Activated B cell treated with CpG ODN at 0.5 μM for 24 hours (primary cell): ENCODE measurements at regions of chr1 and their contacts with region 1.

Region 1: DNA sequence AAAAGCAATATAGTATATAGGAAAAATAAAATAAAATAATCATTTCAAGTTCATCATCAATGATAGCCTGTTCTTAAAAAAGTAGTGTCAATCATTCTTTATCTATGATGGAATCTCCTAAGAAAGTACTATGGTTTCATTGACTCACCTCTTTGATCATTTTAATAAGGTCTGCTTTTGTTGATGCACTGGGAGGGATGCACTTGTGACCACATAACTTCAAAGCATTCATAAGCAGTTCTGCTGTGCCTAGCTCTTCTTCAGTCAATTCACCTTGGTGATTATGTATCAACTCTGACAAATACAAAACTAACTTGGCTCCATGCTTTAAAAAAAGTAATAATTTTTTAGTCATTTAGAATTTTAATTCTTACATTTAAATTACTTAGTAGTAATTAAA is 84.8 kb upstream of the GNG4 start:
- DNase-seq: no peak
- ATAC-seq: no peak
- H3K4me3 Mint-ChIP-seq: no peak overlapping the region
- H3K27ac Mint-ChIP-seq: no peak overlapping the region
- H3K4me1 Mint-ChIP-seq: no peaks in the 10 kb centered on the region
- H3K27me3 Mint-ChIP-seq: no peaks in the 10 kb centered on the region
- CTCF ChIP-seq: no peak

Region 2: DNA sequence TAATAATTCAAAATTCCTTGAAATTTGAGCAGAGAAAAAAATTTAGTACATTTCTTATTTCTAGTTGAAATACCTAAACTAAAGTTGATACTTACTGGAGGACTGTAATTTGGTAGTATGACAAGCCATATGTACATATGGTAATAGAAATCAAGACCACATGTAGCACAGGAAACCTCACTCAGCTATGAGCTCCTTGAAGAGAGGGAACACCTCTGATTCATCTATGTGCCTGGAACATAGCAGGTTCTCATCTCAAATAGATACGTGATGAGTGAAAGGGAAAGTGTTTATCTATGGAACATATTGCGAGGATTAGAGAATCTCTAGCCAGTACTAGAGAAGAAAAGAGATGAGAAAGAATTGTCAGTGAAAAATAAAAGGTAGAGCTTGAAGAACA is 36.8 kb before region 1 on chr1:
- CTCF ChIA-PET with region 1: no interaction called
- POLR2A ChIA-PET with region 1: no interaction called
- intact Hi-C with region 1: no loop called
- DNase-seq: no peak
- ATAC-seq: no peak
- H3K4me3 Mint-ChIP-seq: no peak overlapping the region
- H3K27ac Mint-ChIP-seq: no peak overlapping the region
- H3K4me1 Mint-ChIP-seq: no peaks in the 10 kb centered on the region
- H3K27me3 Mint-ChIP-seq: no peaks in the 10 kb centered on the region
- CTCF ChIP-seq: no peak

Region 3: GRCh38 chr1:235745503-235746136 is 11.3 kb after region 1 on chr1:
- CTCF ChIA-PET with region 1: no interaction called
- POLR2A ChIA-PET with region 1: no interaction called
- intact Hi-C with region 1: loop called (anchors 2 kb)
- DNase-seq: no peak
- ATAC-seq: no peak
- H3K4me3 Mint-ChIP-seq: no peak overlapping the region
- H3K27ac Mint-ChIP-seq: no peak overlapping the region
- H3K4me1 Mint-ChIP-seq: no peaks in the 10 kb centered on the region
- H3K27me3 Mint-ChIP-seq: no peaks in the 10 kb centered on the region
- CTCF ChIP-seq: no peak

Region 4: DNA sequence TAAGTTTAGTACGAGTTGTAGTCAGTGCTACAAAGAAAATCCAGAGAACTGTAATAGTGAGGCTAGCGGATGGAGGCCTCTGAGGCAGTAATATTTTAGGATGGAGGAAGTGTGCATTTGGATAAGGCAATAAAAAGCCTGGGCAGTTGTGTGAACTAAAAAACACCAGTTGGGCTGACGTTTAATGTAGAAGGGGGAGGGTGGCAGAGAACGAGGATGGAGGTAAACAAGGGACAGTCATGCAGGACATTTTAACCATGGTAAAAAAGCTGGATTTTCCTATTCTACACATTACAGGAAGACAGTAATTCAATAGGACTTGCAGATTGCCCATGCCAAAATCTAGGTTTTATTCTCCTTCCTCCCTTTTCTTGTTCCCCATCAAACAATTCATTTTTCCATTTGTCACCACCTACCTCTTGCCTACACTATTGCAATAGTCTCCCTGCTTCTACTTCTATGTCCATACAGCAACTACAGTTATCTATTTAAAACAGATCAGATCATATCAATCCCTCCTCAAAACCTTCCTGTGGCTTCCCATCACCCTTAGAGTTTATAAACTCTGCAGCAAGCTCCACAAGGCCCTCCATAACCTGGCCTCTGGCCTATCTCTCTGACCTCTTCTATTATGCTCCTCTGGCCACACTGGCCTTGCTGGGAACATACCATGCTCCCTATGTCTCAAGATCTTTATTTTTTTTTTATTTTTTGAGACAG is 519.7 kb after region 1 on chr1:
- CTCF ChIA-PET with region 1: no interaction called
- POLR2A ChIA-PET with region 1: no interaction called
- intact Hi-C with region 1: no loop called
- DNase-seq: no peak
- ATAC-seq: no peak
- H3K4me3 Mint-ChIP-seq: no peak overlapping the region
- H3K27ac Mint-ChIP-seq: no peak overlapping the region
- H3K4me1 Mint-ChIP-seq: no peaks in the 10 kb centered on the region
- H3K27me3 Mint-ChIP-seq: no peaks in the 10 kb centered on the region
- CTCF ChIP-seq: no peak

Region 5: GRCh38 chr1:236821091-236821627 is 1086.8 kb after region 1 on chr1:
- CTCF ChIA-PET with region 1: no interaction called
- POLR2A ChIA-PET with region 1: no interaction called
- intact Hi-C with region 1: no loop called
- DNase-seq: no peak
- ATAC-seq: no peak
- H3K4me3 Mint-ChIP-seq: no peak overlapping the region
- H3K27ac Mint-ChIP-seq: no peak overlapping the region
- H3K4me1 Mint-ChIP-seq: no peaks in the 10 kb centered on the region
- H3K27me3 Mint-ChIP-seq: no peaks in the 10 kb centered on the region
- CTCF ChIP-seq: no peak